ENCODE measurements at regions of chr20 and their contacts with region 1.

Region 1: GRCh38 chr20:39676857-39677391 is 714.8 kb downstream of the DHX35 start:
- DNase-seq: peak; percentile 28
- CTCF ChIP-seq: peak; percentile 21

Region 2: DNA sequence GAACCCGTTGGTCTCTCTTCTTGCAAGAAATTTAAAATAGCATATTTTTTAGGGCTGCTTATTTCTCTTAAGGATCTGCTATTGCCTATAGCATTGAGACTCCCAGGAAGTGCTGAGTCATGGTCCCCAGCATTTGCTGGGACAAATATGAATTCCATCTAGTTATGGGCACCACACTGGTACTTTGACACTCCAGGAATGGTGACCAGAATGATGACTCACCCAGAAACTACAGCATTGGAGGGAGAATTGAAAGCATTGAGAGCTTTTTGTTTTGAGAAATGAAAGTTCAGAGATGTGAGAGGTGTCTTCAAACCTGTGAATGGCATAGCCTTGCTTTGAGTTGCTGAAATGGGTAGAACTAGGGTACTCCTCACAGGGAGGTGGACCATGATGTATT is 15.1 kb before region 1 on chr20:
- CTCF ChIA-PET with region 1: interaction called, 14 read pairs
- POLR2A ChIA-PET with region 1: no interaction called
- DNase-seq: no peak
- CTCF ChIP-seq: no peak

Measured in GM10248 (cell line).